ENCODE measurements at regions of chr14 and their contacts with region 1.

Region 1: DNA sequence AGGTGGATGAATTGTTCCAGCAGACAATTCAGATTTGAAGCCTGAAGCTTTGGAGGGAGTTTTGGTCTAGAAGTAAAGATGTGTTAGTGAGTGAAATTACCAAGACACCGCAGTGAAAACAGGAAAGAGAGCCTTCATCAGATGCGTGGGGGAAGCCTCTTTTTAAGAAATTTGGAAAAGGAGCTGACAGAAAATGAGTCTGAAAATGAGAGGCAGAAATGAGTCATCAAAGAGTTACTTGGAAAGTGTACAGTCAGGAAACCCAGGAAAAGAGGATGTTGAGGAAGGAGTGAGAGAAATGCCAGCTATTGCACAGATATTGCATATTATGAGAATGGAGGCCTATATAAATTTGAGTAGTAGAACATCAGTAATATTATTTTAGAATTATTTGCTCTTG is 520.7 kb downstream of the NRXN3 start:
- DNase-seq: no peak
- H3K4me3 ChIP-seq: no peak overlapping the region
- CTCF ChIP-seq: no peak

Region 2: GRCh38 chr14:78593949-78594348 is 96.9 kb before region 1 on chr14:
- in situ Hi-C with region 1: loop called (anchors 5 kb)
- DNase-seq: no peak
- H3K4me3 ChIP-seq: no peak overlapping the region
- CTCF ChIP-seq: no peak

Measured in astrocyte of the cerebellum (primary cell).